ENCODE measurements at regions of chr4 and their contacts with region 1.

Region 1: GRCh38 chr4:103099691-103100392 is at the start of gene BDH2:
- DNase-seq: peak; percentile 72
- ATAC-seq: peak; percentile 97
- H3K4me3 ChIP-seq: peak within 1 kb of the TSS; percentile 74
- H3K27ac ChIP-seq: peak within 1 kb of the TSS; percentile 57; the same call in 1 of the 2 replicates
- H3K4me1 ChIP-seq: peaks cover 4% of the 10 kb centered on the region; the same call in 1 of the 2 replicates
- H3K27me3 ChIP-seq: no peaks in the 10 kb centered on the region
- CTCF ChIP-seq: peak; percentile 57 to 86 (median 71); a peak in 5 of 6 replicates
- EP300 ChIP-seq: no peak
- POLR2A ChIP-seq: 0 out of 2 replicates have a peak, but pooled peaks have one; percentile 35
- RAD21 ChIP-seq: peak; percentile 81
- polyA plus RNA-seq, gene BDH2: 41.0 to 47.3 TPM

Region 2: GRCh38 chr4:102687373-102687981 is 412.4 kb before region 1 on chr4:
- CTCF ChIA-PET with region 1: interaction called, 5 read pairs
- POLR2A ChIA-PET with region 1: no interaction called
- RAD21 ChIA-PET with region 1: no interaction called
- SMC1A ChIA-PET with region 1: no interaction called
- in situ Hi-C with region 1: no loop called
- intact Hi-C with region 1: loop called (anchors 10 kb)
- DNase-seq: peak; percentile 93
- ATAC-seq: peak; percentile 91
- H3K4me3 ChIP-seq: peak overlapping the region; percentile 54; the same call in 1 of the 2 replicates
- H3K27ac ChIP-seq: peak overlapping the region; percentile 90
- H3K4me1 ChIP-seq: peaks cover 36% of the 10 kb centered on the region
- H3K27me3 ChIP-seq: no peaks in the 10 kb centered on the region
- CTCF ChIP-seq: no peak
- EP300 ChIP-seq: peak in 1 of 2 experiments; percentile 69; a peak in 2 of 4 replicates
- POLR2A ChIP-seq: no peak
- RAD21 ChIP-seq: no peak

Region 3: GRCh38 chr4:102760645-102761295 is 339.1 kb before region 1 on chr4 and contains the start of gene MANBA:
- CTCF ChIA-PET with region 1: no interaction called
- POLR2A ChIA-PET with region 1: no interaction called
- RAD21 ChIA-PET with region 1: no interaction called
- SMC1A ChIA-PET with region 1: no interaction called
- in situ Hi-C with region 1: no loop called
- intact Hi-C with region 1: no loop called
- DNase-seq: no peak
- ATAC-seq: peak; percentile 94
- H3K4me3 ChIP-seq: peak within 1 kb of the TSS; percentile 98
- H3K27ac ChIP-seq: peak within 1 kb of the TSS; percentile 85
- H3K4me1 ChIP-seq: no peaks in the 10 kb centered on the region; the same call in 1 of the 2 replicates
- H3K27me3 ChIP-seq: no peaks in the 10 kb centered on the region
- CTCF ChIP-seq: no peak
- EP300 ChIP-seq: no peak
- POLR2A ChIP-seq: peak; percentile 97
- RAD21 ChIP-seq: no peak
- polyA plus RNA-seq, gene MANBA: 3.8 to 6.9 TPM

Region 4: GRCh38 chr4:103019308-103020124 is 80.3 kb before region 1 on chr4 and contains the start of gene SLC9B1:
- CTCF ChIA-PET with region 1: interaction called, 10 read pairs
- POLR2A ChIA-PET with region 1: no interaction called
- RAD21 ChIA-PET with region 1: no interaction called
- SMC1A ChIA-PET with region 1: interaction called, 4 read pairs
- in situ Hi-C with region 1: no loop called
- intact Hi-C with region 1: loop called (anchors 2 kb)
- DNase-seq: peak; percentile 56
- ATAC-seq: peak; percentile 99
- H3K4me3 ChIP-seq: peak within 1 kb of the TSS; percentile 83
- H3K27ac ChIP-seq: peak within 1 kb of the TSS; percentile 87
- H3K4me1 ChIP-seq: peaks cover 5% of the 10 kb centered on the region; the same call in 1 of the 2 replicates
- H3K27me3 ChIP-seq: no peaks in the 10 kb centered on the region
- CTCF ChIP-seq: no peak
- EP300 ChIP-seq: no peak
- POLR2A ChIP-seq: peak; percentile 93
- RAD21 ChIP-seq: no peak
- polyA plus RNA-seq, gene SLC9B1: 1.9 to 2.1 TPM

Region 5: DNA sequence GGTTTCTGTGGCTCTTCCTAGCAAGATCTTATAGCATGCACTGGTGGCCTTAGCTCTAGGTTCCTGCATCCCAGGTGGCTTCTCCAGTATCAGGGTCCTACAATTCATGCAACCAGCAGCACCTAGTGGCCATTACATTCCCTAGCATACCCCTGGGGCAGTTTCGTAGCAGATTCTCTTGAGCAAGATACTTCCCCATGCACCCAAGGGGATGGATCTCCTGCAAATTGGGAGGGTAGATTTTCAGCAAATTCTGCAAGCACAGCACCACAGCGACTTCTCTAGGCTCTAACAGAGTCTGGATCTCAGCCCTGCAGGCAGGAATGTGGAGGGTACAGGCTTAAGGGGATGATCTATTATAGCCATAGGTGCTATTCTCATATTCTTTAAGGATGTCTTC is 67.3 kb before region 1 on chr4:
- CTCF ChIA-PET with region 1: interaction called, 16 read pairs
- POLR2A ChIA-PET with region 1: interaction called, 3 read pairs
- RAD21 ChIA-PET with region 1: interaction called, 4 read pairs
- SMC1A ChIA-PET with region 1: interaction called, 5 read pairs
- in situ Hi-C with region 1: no loop called
- intact Hi-C with region 1: no loop called
- DNase-seq: no peak
- ATAC-seq: peak; percentile 92
- H3K4me3 ChIP-seq: no peak overlapping the region
- H3K27ac ChIP-seq: no peak overlapping the region
- H3K4me1 ChIP-seq: no peaks in the 10 kb centered on the region
- H3K27me3 ChIP-seq: no peaks in the 10 kb centered on the region
- CTCF ChIP-seq: peak; percentile 45 to 64 (median 62)
- EP300 ChIP-seq: no peak
- POLR2A ChIP-seq: no peak
- RAD21 ChIP-seq: peak; percentile 54

Region 6: DNA sequence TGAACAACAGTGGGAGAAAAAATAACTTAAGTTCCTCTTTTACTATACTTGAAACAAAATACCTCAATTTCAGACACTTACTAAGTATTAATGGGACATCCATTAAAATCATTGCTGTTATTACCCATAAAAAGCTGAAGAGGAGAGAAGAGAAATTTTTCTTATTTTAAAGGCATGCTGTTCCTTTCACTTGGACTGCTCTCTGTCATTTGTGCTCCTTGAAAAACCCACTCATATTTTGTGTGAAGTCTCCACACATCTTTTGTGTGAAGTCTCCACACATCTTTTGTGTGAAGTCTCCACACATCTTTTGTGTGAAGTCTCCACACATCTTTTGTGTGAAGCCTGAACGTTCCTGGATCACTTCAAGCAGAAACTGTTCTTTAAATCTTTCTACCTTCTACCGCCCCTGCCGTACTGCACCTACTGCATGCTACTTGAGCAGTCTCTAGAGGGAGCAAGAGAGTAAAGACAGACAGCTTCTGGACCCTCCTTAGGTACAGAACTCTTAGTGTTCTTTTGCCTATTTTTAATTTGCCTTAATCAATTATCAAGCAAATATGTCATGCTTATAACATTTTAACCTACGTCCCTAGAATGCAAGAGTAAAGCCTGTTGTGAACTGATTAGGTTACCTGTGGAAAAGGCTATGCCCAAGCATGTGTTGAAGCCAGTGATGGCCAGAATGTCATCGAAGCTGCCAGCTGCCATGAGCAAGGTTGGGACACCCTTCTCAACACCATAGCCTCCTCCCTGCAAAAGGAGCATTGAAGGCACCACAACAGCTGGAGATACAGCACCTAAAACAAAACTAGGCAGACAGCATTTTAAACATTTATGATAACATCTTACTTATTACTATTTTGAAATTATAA is 53.2 kb before region 1 on chr4:
- CTCF ChIA-PET with region 1: interaction called, 179 read pairs
- POLR2A ChIA-PET with region 1: no interaction called
- RAD21 ChIA-PET with region 1: interaction called, 13 read pairs
- SMC1A ChIA-PET with region 1: interaction called, 98 read pairs
- in situ Hi-C with region 1: no loop called
- intact Hi-C with region 1: no loop called
- DNase-seq: no peak
- ATAC-seq: peak; percentile 98
- H3K4me3 ChIP-seq: no peak overlapping the region
- H3K27ac ChIP-seq: no peak overlapping the region
- H3K4me1 ChIP-seq: peaks cover 6% of the 10 kb centered on the region
- H3K27me3 ChIP-seq: no peaks in the 10 kb centered on the region
- CTCF ChIP-seq: peak; percentile 68 to 78 (median 72)
- EP300 ChIP-seq: no peak
- POLR2A ChIP-seq: no peak
- RAD21 ChIP-seq: peak; percentile 74

Measured in GM12878 (cell line).